ENCODE measurements at regions of chr9 and their contacts with region 1.

Region 1: DNA sequence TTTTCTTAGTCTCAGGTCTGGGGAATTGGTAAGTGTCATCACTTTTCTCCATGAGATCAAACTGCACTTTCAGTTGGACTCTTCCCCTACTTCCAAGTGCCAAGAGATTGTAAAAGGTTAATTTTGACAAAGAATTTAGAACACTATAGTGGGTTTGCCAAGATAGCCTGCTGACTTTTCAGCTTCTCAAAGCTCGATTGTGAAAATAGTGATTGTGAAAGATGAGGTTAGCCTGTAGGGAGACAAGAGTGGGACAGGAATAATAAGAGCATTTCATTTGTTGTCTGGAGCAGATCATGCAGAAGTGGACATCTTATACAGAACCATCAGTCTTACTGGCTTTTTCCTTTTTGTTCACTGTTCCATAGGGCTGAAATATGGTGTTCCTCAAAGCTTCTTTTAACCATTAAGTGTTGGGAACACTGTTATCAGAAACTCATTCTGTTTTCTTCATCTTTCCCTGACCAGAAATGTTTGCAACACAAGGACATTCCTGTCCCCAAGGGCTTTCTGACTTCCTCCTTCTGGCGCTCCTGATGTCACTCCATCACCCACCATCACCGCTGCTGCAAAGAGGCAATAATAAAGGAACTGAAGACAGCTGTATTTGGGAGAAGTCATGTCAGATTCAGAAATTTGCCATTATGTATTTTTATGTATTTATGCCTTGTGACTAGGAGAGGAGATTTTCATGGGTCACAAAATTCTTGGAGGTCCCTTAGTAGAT is 11.6 kb upstream of the SPTAN1 start:
- DNase-seq: no peak
- H3K4me3 Mint-ChIP-seq: no peak overlapping the region
- H3K27ac Mint-ChIP-seq: no peak overlapping the region
- H3K4me1 Mint-ChIP-seq: peaks cover 4% of the 10 kb centered on the region
- H3K27me3 Mint-ChIP-seq: no peaks in the 10 kb centered on the region

Region 2: DNA sequence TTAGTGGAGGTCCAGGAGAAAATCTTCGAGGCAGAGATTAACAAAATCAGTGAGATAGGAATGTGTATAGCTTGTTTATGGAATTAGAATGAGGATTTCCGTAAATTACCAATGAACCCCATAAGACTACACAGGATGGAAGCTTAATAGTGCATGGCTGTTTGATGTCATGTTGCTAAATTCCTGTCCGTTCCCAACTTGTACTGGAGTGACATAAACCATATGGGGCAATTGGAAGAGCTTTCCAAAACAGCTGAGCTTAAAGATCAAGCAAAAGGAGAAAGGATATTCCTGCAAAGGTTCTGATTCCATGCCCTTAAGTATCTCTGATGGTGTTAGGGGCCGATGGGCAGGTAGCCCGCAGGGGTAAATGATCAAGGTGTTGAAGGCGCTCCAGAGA is 18.8 kb before region 1 on chr9:
- CTCF ChIA-PET with region 1: no interaction called
- POLR2A ChIA-PET with region 1: no interaction called
- DNase-seq: no peak
- H3K4me3 Mint-ChIP-seq: no peak overlapping the region
- H3K27ac Mint-ChIP-seq: no peak overlapping the region
- H3K4me1 Mint-ChIP-seq: peaks cover 2% of the 10 kb centered on the region
- H3K27me3 Mint-ChIP-seq: no peaks in the 10 kb centered on the region

Region 3: GRCh38 chr9:128550770-128551656 is 10.2 kb after region 1 on chr9:
- CTCF ChIA-PET with region 1: interaction called, 10 read pairs
- POLR2A ChIA-PET with region 1: no interaction called
- DNase-seq: no peak
- H3K4me3 Mint-ChIP-seq: peak overlapping the region; percentile 92
- H3K27ac Mint-ChIP-seq: peak overlapping the region; percentile 97
- H3K4me1 Mint-ChIP-seq: peaks cover 26% of the 10 kb centered on the region
- H3K27me3 Mint-ChIP-seq: no peaks in the 10 kb centered on the region

Region 4: GRCh38 chr9:128635283-128636023 is 94.7 kb after region 1 on chr9:
- CTCF ChIA-PET with region 1: no interaction called
- POLR2A ChIA-PET with region 1: no interaction called
- DNase-seq: no peak
- H3K4me3 Mint-ChIP-seq: no peak overlapping the region
- H3K27ac Mint-ChIP-seq: no peak overlapping the region
- H3K4me1 Mint-ChIP-seq: no peaks in the 10 kb centered on the region
- H3K27me3 Mint-ChIP-seq: no peaks in the 10 kb centered on the region